K562 (cell line): ENCODE measurements at regions of chr11 and their contacts with region 1.

Region 1: GRCh38 chr11:35617687-35618496 is at the start of gene FJX1:
- DNase-seq: peak; percentile 63 to 81 (median 78)
- ATAC-seq: peak; percentile 71
- H3K4me3 ChIP-seq: peak within 1 kb of the TSS; percentile 35
- H3K27ac ChIP-seq: no peak within 1 kb of the TSS
- H3K4me1 ChIP-seq: peaks cover 0 to 24% of the 10 kb centered on the region in 2 experiments; a peak in 4 of 5 replicates
- H3K27me3 ChIP-seq: peaks cover 21 to 30% of the 10 kb centered on the region in 2 experiments
- CTCF ChIP-seq: no peak
- EP300 ChIP-seq: no peak
- POLR2A ChIP-seq: no peak
- RAD21 ChIP-seq: no peak
- polyA plus RNA-seq, gene FJX1: 0.10 to 0.38 TPM

Region 2: DNA sequence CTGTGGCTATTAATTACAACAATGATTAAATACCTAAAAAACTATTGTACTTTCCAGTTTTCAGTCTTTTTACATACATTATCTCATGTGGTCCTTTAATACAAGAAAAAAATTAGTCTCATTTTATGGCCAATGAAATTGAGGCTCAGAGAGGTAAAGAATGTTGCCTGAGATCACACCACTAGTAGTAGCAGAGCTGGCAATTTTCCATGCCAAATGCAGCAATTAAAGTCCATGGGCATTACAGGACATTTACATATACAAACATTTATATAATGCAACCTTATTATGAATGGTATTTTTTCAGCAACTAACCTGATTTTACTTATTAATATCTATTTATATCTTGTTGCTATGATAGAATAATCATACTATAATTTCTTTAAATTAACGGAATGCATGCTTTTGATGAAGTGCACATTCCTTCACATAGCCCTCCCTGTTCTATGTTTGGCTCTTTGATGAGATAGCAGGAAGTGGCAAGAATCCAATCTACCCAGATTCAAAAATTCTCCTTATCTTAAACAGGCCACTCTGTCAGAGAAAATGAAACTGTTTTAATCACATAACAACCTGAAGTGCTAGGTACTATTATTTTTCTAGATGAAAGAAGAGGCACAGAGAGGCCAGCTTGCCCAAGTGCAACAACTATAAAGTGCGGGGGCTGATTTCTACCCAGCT is 205.1 kb after region 1 on chr11:
- CTCF ChIA-PET with region 1: interaction called, 10 read pairs
- POLR2A ChIA-PET with region 1: no interaction called
- in situ Hi-C with region 1: no loop called
- intact Hi-C with region 1: loop called (anchors 1 kb)
- DNase-seq: no peak
- ATAC-seq: no peak
- H3K4me3 ChIP-seq: no peak overlapping the region
- H3K27ac ChIP-seq: no peak overlapping the region
- H3K4me1 ChIP-seq: no peaks in the 10 kb centered on the region; a peak in 2 of 5 replicates
- H3K27me3 ChIP-seq: peaks cover 3 to 16% of the 10 kb centered on the region in 2 experiments; a peak in 3 of 5 replicates
- CTCF ChIP-seq: no peak
- EP300 ChIP-seq: no peak
- POLR2A ChIP-seq: no peak
- RAD21 ChIP-seq: no peak

Region 3: GRCh38 chr11:36034551-36035331 is 416.8 kb after region 1 on chr11:
- CTCF ChIA-PET with region 1: no interaction called
- POLR2A ChIA-PET with region 1: no interaction called
- in situ Hi-C with region 1: no loop called
- intact Hi-C with region 1: loop called (anchors 5 kb)
- DNase-seq: no peak
- ATAC-seq: no peak
- H3K4me3 ChIP-seq: no peak overlapping the region
- H3K27ac ChIP-seq: no peak overlapping the region
- H3K4me1 ChIP-seq: no peaks in the 10 kb centered on the region; a peak in 2 of 5 replicates
- H3K27me3 ChIP-seq: peaks cover 0 to 6% of the 10 kb centered on the region in 2 experiments; a peak in 1 of 5 replicates
- CTCF ChIP-seq: peak in 1 of 3 experiments; percentile 27; a peak in 1 of 6 replicates
- EP300 ChIP-seq: no peak
- POLR2A ChIP-seq: no peak
- RAD21 ChIP-seq: peak; percentile 22 to 39

Region 4: GRCh38 chr11:36131721-36132397 is 514.0 kb after region 1 on chr11:
- CTCF ChIA-PET with region 1: interaction called, 9 read pairs
- POLR2A ChIA-PET with region 1: no interaction called
- in situ Hi-C with region 1: no loop called
- intact Hi-C with region 1: loop called (anchors 2 kb)
- DNase-seq: peak; percentile 39 to 73 (median 54)
- ATAC-seq: peak; percentile 97
- H3K4me3 ChIP-seq: no peak overlapping the region
- H3K27ac ChIP-seq: no peak overlapping the region
- H3K4me1 ChIP-seq: peaks cover 0 to 5% of the 10 kb centered on the region in 2 experiments; a peak in 3 of 5 replicates
- H3K27me3 ChIP-seq: no peaks in the 10 kb centered on the region
- CTCF ChIP-seq: peak; percentile 80 to 88 (median 84)
- EP300 ChIP-seq: no peak
- POLR2A ChIP-seq: no peak
- RAD21 ChIP-seq: peak; percentile 92

Region 5: DNA sequence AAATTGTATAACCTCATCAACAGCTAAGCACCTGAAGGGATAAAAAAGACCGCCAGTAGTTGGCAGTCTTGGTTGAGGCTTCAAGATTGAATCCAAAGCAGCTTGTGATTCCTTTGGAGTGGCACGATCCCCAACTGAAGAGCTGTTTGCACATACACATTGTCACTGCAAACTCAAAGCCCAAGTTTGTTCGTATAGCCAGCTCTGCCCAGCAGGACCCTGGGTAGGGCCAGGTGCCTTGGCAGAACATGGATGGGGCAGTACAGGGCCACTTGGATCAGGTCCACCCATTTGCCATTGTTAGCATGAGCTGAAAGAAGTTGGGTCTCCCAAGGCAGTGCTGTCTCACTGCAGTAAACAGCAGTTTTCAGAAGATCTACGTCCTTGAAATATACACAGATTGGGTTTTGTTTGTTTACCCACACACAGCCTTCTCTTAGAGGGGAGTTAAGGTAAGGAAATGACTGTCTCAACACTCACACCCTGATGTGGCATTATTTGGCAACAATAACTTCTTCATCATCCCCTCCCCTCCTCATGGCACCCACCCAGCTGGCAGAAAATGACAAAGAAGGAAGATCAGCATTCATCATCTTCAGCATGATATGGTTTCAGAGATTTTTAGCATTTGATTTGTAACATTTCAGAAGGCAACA is 538.4 kb after region 1 on chr11:
- CTCF ChIA-PET with region 1: no interaction called
- POLR2A ChIA-PET with region 1: interaction called, 3 read pairs
- in situ Hi-C with region 1: loop called (anchors 5 kb)
- intact Hi-C with region 1: no loop called
- DNase-seq: no peak
- ATAC-seq: no peak
- H3K4me3 ChIP-seq: no peak overlapping the region
- H3K27ac ChIP-seq: no peak overlapping the region
- H3K4me1 ChIP-seq: no peaks in the 10 kb centered on the region
- H3K27me3 ChIP-seq: peaks cover 0 to 2% of the 10 kb centered on the region in 2 experiments; a peak in 1 of 5 replicates
- CTCF ChIP-seq: no peak; a peak in 1 of 6 replicates
- EP300 ChIP-seq: no peak
- POLR2A ChIP-seq: no peak
- RAD21 ChIP-seq: no peak

Region 6: DNA sequence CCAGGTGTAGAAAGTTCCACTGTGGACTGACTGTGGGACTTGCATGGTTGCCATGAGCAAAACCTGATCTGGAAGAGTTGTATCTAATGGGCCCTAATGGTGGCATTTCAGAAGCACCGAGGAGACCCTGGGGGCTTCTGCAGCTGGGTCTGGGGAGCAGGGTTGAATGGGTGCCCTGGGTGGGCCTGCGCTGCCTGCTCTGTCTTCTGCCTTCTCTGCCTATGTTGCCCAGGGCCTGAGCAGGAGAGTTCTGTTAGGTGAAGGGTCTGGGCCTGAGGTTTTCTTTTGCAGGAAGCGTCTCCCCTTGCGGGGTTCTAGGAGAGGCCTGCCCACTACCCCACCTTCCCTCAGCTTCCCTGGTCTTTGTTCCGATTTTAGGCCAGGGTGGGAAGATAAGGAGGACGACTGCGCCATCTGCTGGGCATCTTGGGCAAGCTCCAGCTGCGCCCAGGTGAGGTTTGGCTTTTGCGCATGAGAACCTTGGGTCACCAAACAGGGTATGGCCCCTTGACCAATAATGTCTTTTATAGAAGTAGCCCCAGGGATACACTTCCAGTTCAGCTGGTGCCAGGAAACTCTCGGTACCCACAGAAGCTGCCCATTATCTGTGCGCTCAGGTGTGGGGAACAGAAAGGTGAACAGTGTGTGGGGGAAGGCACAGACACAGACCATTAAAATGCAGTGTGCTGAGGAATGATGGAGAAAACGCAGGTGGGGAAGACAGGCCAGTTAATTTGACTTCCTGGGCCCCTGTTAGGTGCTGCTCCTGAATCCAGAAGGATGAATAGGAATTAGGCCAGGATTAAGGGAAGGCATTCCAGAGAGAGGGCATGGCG is 648.1 kb after region 1 on chr11:
- CTCF ChIA-PET with region 1: interaction called, 23 read pairs
- POLR2A ChIA-PET with region 1: no interaction called
- in situ Hi-C with region 1: no loop called
- intact Hi-C with region 1: loop called (anchors 1 kb)
- DNase-seq: peak; percentile 73 to 78 (median 76)
- ATAC-seq: peak; percentile 95
- H3K4me3 ChIP-seq: no peak overlapping the region
- H3K27ac ChIP-seq: no peak overlapping the region
- H3K4me1 ChIP-seq: no peaks in the 10 kb centered on the region
- H3K27me3 ChIP-seq: peaks cover 0 to 5% of the 10 kb centered on the region in 2 experiments; a peak in 3 of 5 replicates
- CTCF ChIP-seq: peak; percentile 79 to 89 (median 79)
- EP300 ChIP-seq: no peak
- POLR2A ChIP-seq: no peak
- RAD21 ChIP-seq: peak; percentile 82 to 90